ENCODE measurements at regions of chr12 and their contacts with region 1.

Region 1: DNA sequence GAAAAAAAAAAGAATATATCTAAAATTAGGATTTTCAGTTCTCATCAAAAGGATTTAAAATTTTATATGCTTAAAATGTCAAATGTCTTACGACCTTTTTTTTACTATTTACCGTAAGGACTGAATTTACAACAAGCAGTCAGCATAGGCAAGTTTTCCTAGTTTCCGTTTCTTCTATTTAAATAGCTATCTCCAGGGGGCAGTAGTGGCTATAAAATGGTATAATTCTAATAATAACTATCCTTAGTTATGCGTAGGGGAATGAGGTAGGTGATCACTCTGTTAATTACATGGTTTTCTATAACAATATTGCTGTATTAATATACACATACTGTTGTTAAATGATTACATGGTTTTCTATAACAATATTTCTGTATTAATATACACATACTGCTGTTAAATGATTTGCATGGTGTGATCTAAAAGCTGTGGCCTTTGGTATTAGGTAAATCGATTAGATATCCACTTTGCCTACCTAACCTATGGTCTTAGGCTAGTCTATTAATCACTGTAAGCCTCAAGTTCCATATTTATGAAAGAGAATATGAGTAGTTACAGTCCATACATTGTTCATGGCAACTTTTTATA is 217.7 kb upstream of the PDZRN4 start:
- DNase-seq: no peak
- ATAC-seq: no peak

Region 2: GRCh38 chr12:40552868-40553267 is 417.5 kb before region 1 on chr12:
- intact Hi-C with region 1: no loop called
- DNase-seq: no peak
- ATAC-seq: no peak

Region 3: GRCh38 chr12:40946612-40947194 is 23.7 kb before region 1 on chr12:
- intact Hi-C with region 1: no loop called
- DNase-seq: no peak
- ATAC-seq: no peak

Region 4: DNA sequence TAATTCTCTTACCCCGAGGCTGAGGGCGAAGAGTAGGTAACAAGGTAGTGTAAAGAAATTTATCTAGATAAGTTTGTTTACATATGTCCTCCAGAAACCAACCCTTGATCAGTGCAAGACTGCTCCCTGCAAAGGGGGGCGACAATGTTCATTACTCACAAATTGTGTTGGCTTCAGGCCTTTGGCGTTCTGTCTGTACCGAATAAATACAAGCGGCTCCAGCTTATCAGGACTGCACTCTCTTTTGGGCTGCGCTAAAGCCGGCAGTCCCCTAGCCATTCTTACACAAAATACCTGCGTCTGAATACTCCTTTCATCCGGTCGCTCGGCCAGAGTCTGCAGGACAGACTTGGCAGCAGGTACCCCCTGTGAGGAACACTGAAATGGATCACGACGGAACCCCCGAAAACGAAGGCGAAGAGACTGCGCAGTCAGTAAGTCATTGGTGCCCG is 1471.9 kb after region 1 on chr12:
- intact Hi-C with region 1: loop called (anchors 5 kb)
- DNase-seq: no peak
- ATAC-seq: no peak

Measured in sciatic nerve (tissue), 2 donors.